SK-N-SH (cell line): ENCODE measurements at regions of chr1 and their contacts with region 1.

Region 1: GRCh38 chr1:12124693-12125421 is 41.9 kb upstream of the TNFRSF1B start:
- DNase-seq: peak; percentile 77
- H3K4me3 ChIP-seq: peak overlapping the region in 1 of 2 experiments; percentile 14; a peak in 1 of 4 replicates
- H3K27ac ChIP-seq: no peak overlapping the region
- H3K4me1 ChIP-seq: no peaks in the 10 kb centered on the region
- H3K27me3 ChIP-seq: peaks cover 3% of the 10 kb centered on the region; the same call in 1 of the 2 replicates
- CTCF ChIP-seq: peak; percentile 95
- EP300 ChIP-seq: no peak
- RAD21 ChIP-seq: peak; percentile 99

Region 2: GRCh38 chr1:12100071-12100470 is 24.8 kb before region 1 on chr1:
- CTCF ChIA-PET with region 1: interaction called, 35 read pairs
- POLR2A ChIA-PET with region 1: no interaction called
- DNase-seq: no peak
- H3K4me3 ChIP-seq: no peak overlapping the region
- H3K27ac ChIP-seq: no peak overlapping the region
- H3K4me1 ChIP-seq: no peaks in the 10 kb centered on the region; a peak in 1 of 4 replicates
- H3K27me3 ChIP-seq: peaks cover 7% of the 10 kb centered on the region; the same call in 1 of the 2 replicates
- CTCF ChIP-seq: no peak
- EP300 ChIP-seq: no peak
- RAD21 ChIP-seq: no peak

Region 3: DNA sequence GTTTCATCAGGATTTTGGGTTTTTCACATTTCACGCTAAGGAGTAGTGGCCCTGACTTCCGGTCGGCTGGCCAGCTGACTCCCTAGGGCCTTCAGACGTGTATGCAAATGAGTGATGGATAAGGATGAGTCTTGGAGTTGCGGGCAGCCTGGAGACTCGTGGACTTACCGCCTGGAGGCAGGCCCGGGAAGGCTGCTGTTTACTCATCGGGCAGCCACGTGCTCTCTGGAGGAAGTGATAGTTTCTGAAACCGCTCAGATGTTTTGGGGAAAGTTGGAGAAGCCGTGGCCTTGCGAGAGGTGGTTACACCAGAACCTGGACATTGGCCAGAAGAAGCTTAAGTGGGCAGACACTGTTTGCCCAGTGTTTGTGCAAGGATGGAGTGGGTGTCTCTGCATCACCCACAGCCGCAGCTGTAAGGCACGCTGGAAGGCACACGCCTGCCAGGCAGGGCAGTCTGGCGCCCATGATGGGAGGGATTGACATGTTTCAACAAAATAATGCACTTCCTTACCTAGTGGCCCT is 18.8 kb after region 1 on chr1:
- CTCF ChIA-PET with region 1: interaction called, 98 read pairs
- POLR2A ChIA-PET with region 1: no interaction called
- DNase-seq: no peak
- H3K4me3 ChIP-seq: no peak overlapping the region
- H3K27ac ChIP-seq: no peak overlapping the region
- H3K4me1 ChIP-seq: no peaks in the 10 kb centered on the region; a peak in 1 of 4 replicates
- H3K27me3 ChIP-seq: no peaks in the 10 kb centered on the region
- CTCF ChIP-seq: no peak
- EP300 ChIP-seq: no peak
- RAD21 ChIP-seq: no peak

Region 4: GRCh38 chr1:12177999-12178441 is 53.2 kb after region 1 on chr1:
- CTCF ChIA-PET with region 1: interaction called, 79 read pairs
- POLR2A ChIA-PET with region 1: no interaction called
- DNase-seq: peak; percentile 62
- H3K4me3 ChIP-seq: no peak overlapping the region
- H3K27ac ChIP-seq: no peak overlapping the region
- H3K4me1 ChIP-seq: peaks cover 6 to 7% of the 10 kb centered on the region in 2 experiments; a peak in 2 of 4 replicates
- H3K27me3 ChIP-seq: no peaks in the 10 kb centered on the region
- CTCF ChIP-seq: no peak
- EP300 ChIP-seq: no peak
- RAD21 ChIP-seq: no peak

Region 5: DNA sequence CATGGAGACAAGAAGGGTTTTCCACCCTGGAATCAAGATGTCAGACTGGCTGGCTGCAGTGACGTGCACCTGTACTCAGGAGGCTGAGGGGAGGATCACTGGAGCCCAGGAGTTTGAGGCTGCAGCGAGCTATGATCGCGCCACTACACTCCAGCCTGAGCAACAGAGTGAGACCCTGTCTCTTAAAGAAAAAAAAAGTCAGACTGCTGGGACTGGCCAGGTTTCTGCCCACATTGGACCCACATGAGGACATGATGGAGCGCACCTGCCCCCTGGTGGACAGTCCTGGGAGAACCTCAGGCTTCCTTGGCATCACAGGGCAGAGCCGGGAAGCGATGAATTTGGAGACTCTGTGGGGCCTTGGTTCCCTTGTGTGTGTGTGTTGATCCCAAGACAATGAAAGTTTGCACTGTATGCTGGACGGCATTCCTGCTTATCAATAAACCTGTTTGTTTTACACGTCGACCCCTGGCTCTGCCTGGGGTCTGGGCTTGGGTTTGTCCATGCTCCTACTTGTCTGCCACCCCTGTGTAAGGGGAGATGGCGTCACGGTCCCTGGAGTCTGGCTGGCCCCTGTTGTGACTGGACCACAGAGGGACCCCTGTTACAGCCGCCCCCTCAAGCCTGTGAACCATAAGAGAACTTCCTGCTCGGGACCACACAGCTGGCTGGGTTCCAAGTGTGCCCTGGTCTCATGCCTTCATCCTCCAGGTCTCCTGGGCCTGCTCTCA is 84.1 kb after region 1 on chr1:
- CTCF ChIA-PET with region 1: interaction called, 436 read pairs
- POLR2A ChIA-PET with region 1: no interaction called
- DNase-seq: peak; percentile 88
- H3K4me3 ChIP-seq: peak overlapping the region in 1 of 2 experiments; percentile 22; a peak in 1 of 4 replicates
- H3K27ac ChIP-seq: no peak overlapping the region
- H3K4me1 ChIP-seq: peaks cover 0 to 5% of the 10 kb centered on the region in 2 experiments; a peak in 1 of 4 replicates
- H3K27me3 ChIP-seq: no peaks in the 10 kb centered on the region; the same call in 1 of the 2 replicates
- CTCF ChIP-seq: peak; percentile 93
- EP300 ChIP-seq: no peak
- RAD21 ChIP-seq: peak; percentile 97

Region 6: DNA sequence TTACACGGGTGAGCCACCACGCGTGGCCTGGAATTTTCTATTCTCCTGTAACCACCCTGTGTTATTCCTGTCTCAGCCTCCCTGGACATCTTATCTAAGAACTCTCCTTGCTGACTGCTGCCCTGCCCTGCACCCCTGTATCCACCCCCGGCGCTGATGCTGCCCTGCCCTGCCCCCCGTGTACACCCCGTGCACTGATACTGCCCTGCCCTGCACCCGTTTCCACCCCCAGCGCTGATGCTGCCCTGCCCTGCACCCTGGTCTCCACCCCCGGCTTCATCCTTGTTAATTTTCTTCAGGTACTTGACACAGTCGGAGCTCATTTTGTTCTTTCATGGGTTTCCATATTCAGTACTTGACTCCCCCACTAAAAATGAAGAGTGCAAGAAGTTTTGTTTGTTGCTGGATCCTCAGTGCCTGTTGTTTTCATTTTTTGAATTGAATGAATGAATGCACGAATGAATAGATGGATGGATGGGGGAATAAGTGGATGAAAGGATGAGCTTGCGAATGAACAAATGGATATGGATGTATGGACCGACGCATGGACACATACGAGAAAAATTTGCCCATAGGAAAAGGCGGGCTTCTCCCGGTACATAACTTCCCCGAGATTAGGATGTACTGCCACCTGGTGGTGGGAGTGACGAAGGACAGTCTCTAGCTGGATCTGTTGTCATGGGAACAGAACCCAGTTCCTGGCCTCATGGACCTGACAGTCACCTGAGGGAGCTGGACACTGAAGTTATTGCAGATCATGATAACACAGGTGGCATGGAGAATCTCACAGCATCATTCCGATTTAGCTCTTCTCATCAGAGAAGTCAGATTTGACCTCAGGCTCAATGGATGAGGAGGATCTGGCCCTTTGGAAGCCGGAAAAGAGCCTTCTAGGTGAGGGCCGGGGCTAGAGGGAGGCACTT is 533.9 kb after region 1 on chr1:
- CTCF ChIA-PET with region 1: interaction called, 11 read pairs
- POLR2A ChIA-PET with region 1: no interaction called
- DNase-seq: peak; percentile 89
- H3K4me3 ChIP-seq: peak overlapping the region in 1 of 2 experiments; percentile 34; a peak in 1 of 4 replicates
- H3K27ac ChIP-seq: no peak overlapping the region
- H3K4me1 ChIP-seq: no peaks in the 10 kb centered on the region
- H3K27me3 ChIP-seq: no peaks in the 10 kb centered on the region
- CTCF ChIP-seq: peak; percentile 89
- EP300 ChIP-seq: no peak
- RAD21 ChIP-seq: peak; percentile 94